ENCODE measurements at regions of chr12 and their contacts with region 1.

Region 1: DNA sequence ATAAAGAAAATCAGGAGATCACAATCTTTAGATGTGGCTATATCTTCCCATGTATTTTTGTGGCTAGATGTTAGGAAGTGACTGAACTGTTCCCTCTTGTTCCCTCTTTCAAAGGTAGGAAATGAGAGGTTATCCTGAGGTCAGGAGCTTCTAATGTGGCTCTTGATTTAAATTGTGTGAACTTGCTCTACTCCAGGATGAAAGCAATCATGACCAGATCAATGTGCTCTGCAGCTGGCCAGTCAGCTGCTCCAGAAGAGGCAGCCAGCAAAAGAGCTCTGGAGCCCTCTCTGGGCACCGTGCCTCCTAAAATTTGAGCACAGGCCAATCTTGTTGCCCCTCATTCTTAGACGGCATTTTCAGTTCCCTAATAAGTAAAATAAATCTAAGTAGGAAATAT is 32.0 kb downstream of the CDK17 start:
- DNase-seq: no peak
- ATAC-seq: no peak
- H3K4me3 ChIP-seq: no peak overlapping the region
- H3K27ac ChIP-seq: no peak overlapping the region
- H3K4me1 ChIP-seq: peaks cover 16% of the 10 kb centered on the region
- H3K27me3 ChIP-seq: no peaks in the 10 kb centered on the region
- CTCF ChIP-seq: no peak

Region 2: GRCh38 chr12:95642583-95642982 is 725.6 kb before region 1 on chr12:
- CTCF ChIA-PET with region 1: no interaction called
- POLR2A ChIA-PET with region 1: interaction called, 17 read pairs
- in situ Hi-C with region 1: no loop called
- intact Hi-C with region 1: no loop called
- DNase-seq: no peak
- ATAC-seq: no peak
- H3K4me3 ChIP-seq: no peak overlapping the region
- H3K27ac ChIP-seq: no peak overlapping the region
- H3K4me1 ChIP-seq: no peaks in the 10 kb centered on the region
- H3K27me3 ChIP-seq: no peaks in the 10 kb centered on the region
- CTCF ChIP-seq: no peak